CD8-positive, alpha-beta memory T cell (primary cell): ENCODE measurements at regions of chr5 and their contacts with region 1.

Region 1: GRCh38 chr5:158695595-158696330 is 404.0 kb downstream of the EBF1 start:
- DNase-seq: peak; percentile 44 to 66 (median 55)
- H3K4me3 ChIP-seq: no peak overlapping the region
- H3K4me3 Mint-ChIP-seq: no peak overlapping the region
- H3K27ac ChIP-seq: no peak overlapping the region
- H3K27ac Mint-ChIP-seq: no peak overlapping the region
- H3K4me1 ChIP-seq: no peaks in the 10 kb centered on the region
- H3K4me1 Mint-ChIP-seq: peaks cover 0 to 3% (median 3%) of the 10 kb centered on the region in 3 donors
- H3K27me3 ChIP-seq: peaks cover 5% of the 10 kb centered on the region
- H3K27me3 Mint-ChIP-seq: peaks cover 7 to 11% of the 10 kb centered on the region in 2 donors

Region 2: DNA sequence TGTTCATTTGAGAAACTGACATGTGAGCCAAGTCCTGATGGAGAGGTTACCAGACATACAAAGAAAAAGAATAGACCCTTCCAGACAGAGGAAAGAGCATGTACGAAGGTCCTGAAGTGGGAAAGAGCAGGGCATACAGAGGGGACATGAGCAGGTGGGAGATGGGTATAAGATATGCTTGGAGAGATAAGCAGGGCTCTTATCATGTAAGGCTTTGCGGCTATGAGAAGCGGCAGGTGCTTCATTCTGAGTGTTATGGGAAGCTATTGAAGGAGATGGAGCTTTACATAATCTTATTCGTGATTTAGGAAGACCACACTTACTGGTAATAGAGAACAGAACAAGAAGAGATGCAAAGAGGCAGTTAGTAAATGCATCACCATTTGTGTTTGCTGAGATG is 13.1 kb before region 1 on chr5:
- CTCF ChIA-PET with region 1: interaction called, 23 read pairs
- POLR2A ChIA-PET with region 1: no interaction called
- DNase-seq: no peak
- H3K4me3 ChIP-seq: no peak overlapping the region
- H3K4me3 Mint-ChIP-seq: no peak overlapping the region
- H3K27ac ChIP-seq: no peak overlapping the region
- H3K27ac Mint-ChIP-seq: no peak overlapping the region
- H3K4me1 ChIP-seq: no peaks in the 10 kb centered on the region
- H3K4me1 Mint-ChIP-seq: no peaks in the 10 kb centered on the region
- H3K27me3 ChIP-seq: no peaks in the 10 kb centered on the region
- H3K27me3 Mint-ChIP-seq: peaks cover 2 to 51% of the 10 kb centered on the region in 2 donors

Region 3: DNA sequence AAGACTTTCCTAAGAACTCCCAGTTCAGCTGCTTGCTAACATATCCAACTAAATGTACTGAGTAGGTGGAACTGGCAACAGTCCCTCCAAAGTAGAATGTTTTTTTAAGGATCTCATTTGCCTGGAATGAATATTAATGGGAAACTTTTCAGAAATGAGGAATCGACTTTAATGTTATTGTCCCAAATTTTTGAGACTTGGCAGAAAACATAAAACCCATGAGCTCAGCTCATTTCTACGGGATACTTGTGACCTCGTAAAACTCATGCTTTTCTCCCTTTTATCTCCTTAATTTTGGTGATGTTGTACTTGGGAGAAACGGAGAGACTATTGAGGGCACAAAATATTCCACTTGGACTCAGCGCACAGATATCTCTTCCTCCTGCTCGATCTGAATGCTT is 107.2 kb after region 1 on chr5:
- CTCF ChIA-PET with region 1: no interaction called
- POLR2A ChIA-PET with region 1: no interaction called
- DNase-seq: no peak
- H3K4me3 ChIP-seq: no peak overlapping the region
- H3K4me3 Mint-ChIP-seq: no peak overlapping the region
- H3K27ac ChIP-seq: no peak overlapping the region
- H3K27ac Mint-ChIP-seq: no peak overlapping the region
- H3K4me1 ChIP-seq: no peaks in the 10 kb centered on the region
- H3K4me1 Mint-ChIP-seq: no peaks in the 10 kb centered on the region
- H3K27me3 ChIP-seq: no peaks in the 10 kb centered on the region
- H3K27me3 Mint-ChIP-seq: peaks cover 6 to 27% of the 10 kb centered on the region in 2 donors

Region 4: GRCh38 chr5:159106569-159107282 is 411.0 kb after region 1 on chr5:
- CTCF ChIA-PET with region 1: interaction called, 135 read pairs
- POLR2A ChIA-PET with region 1: interaction called, 8 read pairs
- DNase-seq: peak; percentile 47 to 66 (median 52)
- H3K4me3 ChIP-seq: peak overlapping the region; percentile 44
- H3K4me3 Mint-ChIP-seq: peak overlapping the region in 6 of 7 donors; percentile 78 to 92 (median 83)
- H3K27ac ChIP-seq: no peak overlapping the region
- H3K27ac Mint-ChIP-seq: peak overlapping the region in 1 of 8 donors; percentile 21
- H3K4me1 ChIP-seq: peaks cover 18% of the 10 kb centered on the region
- H3K4me1 Mint-ChIP-seq: peaks cover 27 to 32% (median 27%) of the 10 kb centered on the region in 3 donors
- H3K27me3 ChIP-seq: peaks cover 24% of the 10 kb centered on the region
- H3K27me3 Mint-ChIP-seq: peaks cover 48 to 68% of the 10 kb centered on the region in 2 donors

Region 5: GRCh38 chr5:159128070-159128541 is 432.3 kb after region 1 on chr5:
- CTCF ChIA-PET with region 1: interaction called, 34 read pairs
- POLR2A ChIA-PET with region 1: no interaction called
- DNase-seq: no peak
- H3K4me3 ChIP-seq: no peak overlapping the region
- H3K4me3 Mint-ChIP-seq: no peak overlapping the region
- H3K27ac ChIP-seq: no peak overlapping the region
- H3K27ac Mint-ChIP-seq: peak overlapping the region in 1 of 8 donors; percentile 74
- H3K4me1 ChIP-seq: no peaks in the 10 kb centered on the region
- H3K4me1 Mint-ChIP-seq: no peaks in the 10 kb centered on the region
- H3K27me3 ChIP-seq: no peaks in the 10 kb centered on the region
- H3K27me3 Mint-ChIP-seq: peaks cover 17 to 48% of the 10 kb centered on the region in 2 donors

Region 6: GRCh38 chr5:159133041-159133741 is 437.4 kb after region 1 on chr5:
- CTCF ChIA-PET with region 1: interaction called, 34 read pairs
- POLR2A ChIA-PET with region 1: no interaction called
- DNase-seq: peak in 2 of 5 donors; percentile 36 to 38
- H3K4me3 ChIP-seq: no peak overlapping the region
- H3K4me3 Mint-ChIP-seq: no peak overlapping the region
- H3K27ac ChIP-seq: no peak overlapping the region
- H3K27ac Mint-ChIP-seq: no peak overlapping the region
- H3K4me1 ChIP-seq: no peaks in the 10 kb centered on the region
- H3K4me1 Mint-ChIP-seq: no peaks in the 10 kb centered on the region
- H3K27me3 ChIP-seq: no peaks in the 10 kb centered on the region
- H3K27me3 Mint-ChIP-seq: peaks cover 9 to 49% of the 10 kb centered on the region in 2 donors